ENCODE measurements at regions of chr19 and their contacts with region 1.

Region 1: GRCh38 chr19:21210037-21210621 is 68.3 kb downstream of the ZNF431 start:
- DNase-seq: no peak

Region 2: DNA sequence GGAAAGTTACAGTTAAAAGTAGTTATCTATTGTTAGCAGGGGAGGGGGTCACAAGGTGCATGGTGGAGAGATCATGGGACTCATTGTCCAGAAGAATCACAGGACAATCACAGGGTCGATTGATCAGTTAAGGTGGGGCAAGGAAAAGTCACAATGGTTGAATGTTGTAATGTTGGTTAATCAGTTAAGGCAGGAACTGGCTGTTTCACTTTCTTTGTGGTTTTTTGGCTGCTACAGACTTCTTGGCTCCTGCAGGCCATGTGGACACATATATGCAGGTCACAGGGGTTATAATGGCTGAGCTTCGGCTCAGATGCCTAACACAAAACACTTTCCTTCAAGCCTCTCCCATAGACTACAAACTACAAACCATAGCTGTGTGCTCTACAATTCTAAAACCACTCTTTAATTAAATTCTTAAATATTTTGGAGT is 75.2 kb before region 1 on chr19:
- intact Hi-C with region 1: no loop called
- DNase-seq: no peak

Region 3: GRCh38 chr19:21166436-21166835 is 43.7 kb before region 1 on chr19:
- intact Hi-C with region 1: loop called in 1 of 2 experiments (anchors 2 kb)
- DNase-seq: no peak